ENCODE measurements at regions of chr20 and their contacts with region 1.

Region 1: GRCh38 chr20:34069341-34070078 is 42.5 kb downstream of the EIF2S2 start:
- DNase-seq: peak; percentile 84
- H3K4me3 ChIP-seq: no peak overlapping the region
- CTCF ChIP-seq: peak; percentile 83

Region 2: DNA sequence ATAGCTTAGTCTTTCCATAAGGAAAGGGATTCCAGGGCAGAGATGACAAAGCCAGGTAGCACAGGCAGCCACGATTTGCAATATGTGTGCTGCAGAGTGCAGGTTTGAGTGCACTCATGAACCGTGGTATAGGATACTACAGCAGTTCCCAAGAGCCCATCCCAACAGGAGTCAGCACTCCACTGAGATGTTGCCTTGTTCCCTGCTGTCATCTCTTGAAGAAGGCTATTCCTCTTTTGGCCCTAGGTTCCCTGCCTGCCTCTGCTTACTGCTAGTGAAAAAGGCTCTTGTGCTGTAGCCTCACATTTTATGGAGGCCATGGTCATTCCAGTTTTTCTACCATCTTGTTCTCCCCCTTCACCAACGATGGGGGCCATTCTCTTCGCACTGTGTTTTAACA is 35.6 kb before region 1 on chr20:
- in situ Hi-C with region 1: no loop called
- DNase-seq: no peak
- H3K4me3 ChIP-seq: no peak overlapping the region
- CTCF ChIP-seq: no peak

Region 3: DNA sequence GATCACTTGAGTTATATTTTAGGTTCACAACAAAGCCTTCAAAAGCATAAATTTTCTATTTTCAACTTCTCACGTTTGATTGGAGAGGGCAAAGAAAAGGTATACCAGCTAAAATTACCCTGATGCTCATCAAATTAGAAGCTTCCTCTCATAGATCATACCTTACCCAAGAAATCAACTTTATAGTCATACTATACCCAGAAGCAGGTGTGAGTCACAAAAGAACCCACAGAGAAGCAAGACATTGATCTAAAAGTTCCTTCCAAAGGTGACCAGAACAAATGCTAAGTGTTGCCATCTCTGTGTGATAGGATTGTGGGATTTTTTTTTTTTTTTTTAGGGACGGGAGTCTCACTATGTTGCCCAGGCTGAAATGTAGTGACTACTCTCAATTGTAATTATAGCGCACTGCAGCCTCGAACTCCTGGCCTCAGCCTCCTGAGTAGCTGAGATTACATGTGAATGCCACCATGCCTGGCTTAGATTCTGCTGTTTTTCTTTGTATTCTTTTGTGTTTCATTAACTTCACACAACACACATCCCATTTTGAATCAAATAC is 39.2 kb after region 1 on chr20:
- in situ Hi-C with region 1: loop called (anchors 5 kb)
- DNase-seq: no peak
- H3K4me3 ChIP-seq: no peak overlapping the region
- CTCF ChIP-seq: no peak

Measured in astrocyte of the cerebellum (primary cell).